ENCODE measurements at regions of chr6 and their contacts with region 1.

Region 1: GRCh38 chr6:128520436-128521281 is at the start of gene PTPRK:
- DNase-seq: peak; percentile 93 to 94
- ATAC-seq: peak; percentile 94 to 96 (median 95)
- H3K4me3 ChIP-seq: peak within 1 kb of the TSS; percentile 76 to 97 (median 88)
- H3K27ac ChIP-seq: peak within 1 kb of the TSS; percentile 88 to 98 (median 94)
- H3K4me1 ChIP-seq: peaks cover 0 to 39% (median 30%) of the 10 kb centered on the region in 9 donors
- H3K27me3 ChIP-seq: peaks cover 0 to 48% (median 0%) of the 10 kb centered on the region in 7 donors
- CTCF ChIP-seq: peak; percentile 48 to 86 (median 65)
- total RNA-seq, gene PTPRK: 27.1 to 47.7 (median 36.5) TPM

Region 2: DNA sequence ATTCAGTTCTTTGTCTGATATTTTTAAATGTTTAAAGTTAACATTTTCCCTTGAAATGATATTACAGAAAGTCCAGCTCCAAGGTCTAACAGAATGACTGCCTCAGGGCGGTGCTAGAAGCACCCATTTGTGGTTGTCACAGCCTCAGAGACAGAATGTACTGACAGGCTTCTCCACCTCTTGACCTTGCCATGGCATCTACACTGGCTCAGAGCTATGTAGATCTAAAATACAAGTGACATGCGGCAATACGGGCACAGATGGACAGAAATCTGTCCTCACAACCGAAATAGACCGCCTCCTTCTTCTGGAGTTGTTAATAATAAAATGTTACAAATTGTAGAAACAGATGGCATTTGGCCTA is 452.6 kb before region 1 on chr6:
- intact Hi-C with region 1: loop called in 6 of 10 experiments (anchors 2 to 10 kb)
- DNase-seq: peak in 1 of 2 donors; percentile 28
- ATAC-seq: peak; percentile 84 to 98 (median 94)
- H3K4me3 ChIP-seq: no peak overlapping the region
- H3K27ac ChIP-seq: peak overlapping the region in 5 of 10 donors; percentile 11 to 45 (median 36)
- H3K4me1 ChIP-seq: peaks cover 0 to 17% (median 5%) of the 10 kb centered on the region in 9 donors
- H3K27me3 ChIP-seq: no peaks in the 10 kb centered on the region
- CTCF ChIP-seq: peak in 5 of 9 donors; percentile 13 to 54 (median 44)

Region 3: DNA sequence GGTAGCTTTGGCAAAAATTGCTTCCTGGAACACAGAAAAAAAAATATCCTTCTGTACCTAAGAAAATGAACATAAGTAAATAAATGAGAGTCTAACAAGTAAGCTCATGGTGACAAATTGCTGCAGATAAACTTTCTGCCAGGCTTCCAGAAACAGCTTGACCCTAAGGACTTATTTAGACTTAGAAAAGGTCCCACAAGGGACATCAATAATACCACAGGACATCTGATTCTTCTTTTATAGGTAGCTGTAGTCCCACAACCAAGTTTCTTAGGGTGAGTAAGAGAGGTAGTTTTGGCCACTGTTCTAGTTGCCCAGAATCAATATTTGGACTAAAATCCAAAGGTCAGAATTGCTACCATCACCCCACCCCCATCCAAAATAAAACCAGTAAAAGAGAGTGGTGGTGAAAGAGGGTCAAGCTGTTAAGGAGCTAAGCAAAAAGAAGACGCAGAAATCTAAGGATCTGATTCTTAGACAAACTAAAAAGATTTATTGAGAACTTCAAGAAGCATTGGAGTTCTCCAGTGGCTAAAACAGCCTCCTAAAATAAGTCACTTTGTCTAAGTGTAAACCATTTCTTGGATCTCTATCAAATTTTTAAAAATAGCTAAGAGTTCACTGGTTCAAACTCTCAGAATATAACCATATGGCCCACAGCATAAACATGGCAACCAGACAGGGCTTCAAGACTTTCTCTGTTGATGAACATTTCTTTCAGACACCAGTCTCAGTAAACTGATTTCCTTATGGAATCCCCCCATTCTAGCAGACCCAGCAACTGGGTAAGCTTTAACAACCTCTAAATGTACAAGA is 180.8 kb before region 1 on chr6:
- intact Hi-C with region 1: loop called in 5 of 10 experiments (anchors 5 to 10 kb)
- DNase-seq: no peak
- ATAC-seq: peak in 4 of 8 donors; percentile 44 to 58 (median 51)
- H3K4me3 ChIP-seq: no peak overlapping the region
- H3K27ac ChIP-seq: peak overlapping the region in 6 of 10 donors; percentile 15 to 64 (median 41)
- H3K4me1 ChIP-seq: peaks cover 0 to 43% (median 23%) of the 10 kb centered on the region in 9 donors
- H3K27me3 ChIP-seq: no peaks in the 10 kb centered on the region
- CTCF ChIP-seq: no peak

Region 4: DNA sequence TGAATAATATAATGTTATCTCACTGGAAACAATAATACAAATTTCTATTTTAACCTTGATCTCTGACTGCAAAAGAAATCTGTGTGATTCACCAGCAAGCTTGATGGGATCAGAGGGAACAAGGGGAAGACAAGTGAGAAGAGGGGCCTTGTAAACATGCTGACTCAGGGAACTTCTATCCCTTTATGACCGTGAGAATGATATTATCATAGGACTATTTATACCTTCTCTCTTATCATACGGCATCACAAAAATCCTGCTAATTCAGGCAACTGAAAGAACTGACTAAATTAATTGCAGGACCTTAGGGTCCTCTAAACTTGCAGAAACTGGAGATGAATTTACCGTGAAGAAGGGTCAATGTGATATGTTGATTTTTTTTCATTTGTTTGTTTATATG is 173.5 kb before region 1 on chr6:
- intact Hi-C with region 1: loop called in 1 of 10 experiments (anchors 5 kb)
- DNase-seq: no peak
- ATAC-seq: peak in 1 of 8 donors; percentile 48
- H3K4me3 ChIP-seq: no peak overlapping the region
- H3K27ac ChIP-seq: no peak overlapping the region
- H3K4me1 ChIP-seq: peaks cover 0 to 31% (median 9%) of the 10 kb centered on the region in 9 donors
- H3K27me3 ChIP-seq: no peaks in the 10 kb centered on the region
- CTCF ChIP-seq: no peak

Region 5: DNA sequence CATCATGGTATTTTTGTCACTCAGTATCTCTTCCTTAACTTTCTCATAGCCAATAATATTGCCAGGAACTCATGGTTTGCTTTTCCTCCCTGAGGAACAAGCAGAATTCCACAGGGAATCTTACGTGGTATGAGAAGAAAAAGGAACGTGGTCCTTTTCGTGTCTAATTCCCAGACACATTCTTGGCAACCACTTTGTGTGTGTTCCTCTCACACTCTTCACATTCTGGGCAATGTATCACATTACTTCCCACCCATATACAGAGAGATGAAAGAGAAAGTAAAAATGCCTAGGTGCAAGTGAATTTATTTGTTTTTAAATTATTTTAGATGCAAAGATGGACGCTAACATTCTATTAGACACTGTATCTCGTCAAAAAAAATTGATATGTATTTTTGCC is 103.0 kb before region 1 on chr6:
- intact Hi-C with region 1: loop called in 1 of 10 experiments (anchors 5 kb)
- DNase-seq: no peak
- ATAC-seq: peak in 6 of 8 donors; percentile 62 to 77 (median 71)
- H3K4me3 ChIP-seq: peak overlapping the region in 3 of 10 donors; percentile 10 to 13 (median 12)
- H3K27ac ChIP-seq: peak overlapping the region in 8 of 10 donors; percentile 0 to 67 (median 28)
- H3K4me1 ChIP-seq: peaks cover 2 to 51% (median 20%) of the 10 kb centered on the region in 9 donors
- H3K27me3 ChIP-seq: no peaks in the 10 kb centered on the region
- CTCF ChIP-seq: no peak

Region 6: GRCh38 chr6:128606611-128607010 is 86.0 kb after region 1 on chr6:
- intact Hi-C with region 1: no loop called
- DNase-seq: no peak
- ATAC-seq: no peak
- H3K4me3 ChIP-seq: no peak overlapping the region
- H3K27ac ChIP-seq: no peak overlapping the region
- H3K4me1 ChIP-seq: peaks cover 0 to under 1% (median 0%) of the 10 kb centered on the region in 9 donors
- H3K27me3 ChIP-seq: no peaks in the 10 kb centered on the region
- CTCF ChIP-seq: no peak

Region 7: GRCh38 chr6:128725271-128726233 is 204.9 kb after region 1 on chr6:
- intact Hi-C with region 1: loop called in 3 of 10 experiments (anchors 5 to 10 kb)
- DNase-seq: peak in 1 of 2 donors; percentile 28
- ATAC-seq: peak in 1 of 8 donors; percentile 41
- H3K4me3 ChIP-seq: no peak overlapping the region
- H3K27ac ChIP-seq: no peak overlapping the region
- H3K4me1 ChIP-seq: no peaks in the 10 kb centered on the region
- H3K27me3 ChIP-seq: no peaks in the 10 kb centered on the region
- CTCF ChIP-seq: peak; percentile 16 to 75 (median 64)